Activated CD4-positive, alpha-beta memory T cell treated with anti-CD3 and anti-CD28 coated beads for 36 hours (primary cell): ENCODE measurements at regions of chr17 and their contacts with region 1.

Region 1: DNA sequence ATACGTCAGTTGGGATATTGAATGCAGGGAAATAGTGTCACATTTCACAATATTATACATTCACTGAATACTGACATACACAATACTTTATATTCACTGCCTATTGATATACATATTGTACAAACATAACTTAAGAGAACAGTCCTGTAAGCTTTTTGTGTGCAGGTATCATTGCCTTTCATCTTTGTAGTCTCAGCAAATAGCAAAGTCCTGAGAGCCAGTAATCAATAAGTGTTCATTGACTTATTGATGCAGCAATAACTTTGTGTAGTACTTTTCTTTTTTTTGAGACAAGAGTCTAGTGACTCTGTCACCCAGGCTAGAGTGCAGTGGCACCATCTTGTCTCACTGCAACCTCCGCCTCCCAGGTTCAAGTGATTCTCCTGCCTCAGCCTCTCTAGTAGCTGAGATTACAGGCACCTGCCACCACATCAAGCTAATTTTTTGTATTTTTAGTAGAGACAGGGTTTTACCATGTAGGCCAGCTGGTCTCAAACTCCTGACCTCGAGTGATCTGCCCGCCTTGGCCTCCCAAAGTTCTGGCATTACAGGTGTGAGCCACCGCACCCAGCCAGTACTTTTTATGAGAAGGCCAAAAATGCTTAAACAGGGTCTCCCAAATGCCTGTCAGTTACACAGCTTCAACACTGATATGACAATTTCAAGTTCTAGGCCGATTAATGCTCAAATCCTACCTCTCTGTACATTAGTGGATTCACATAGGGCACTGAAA is 5.4 kb upstream of the NUP85 start:
- DNase-seq: no peak
- H3K4me3 Mint-ChIP-seq: no peak overlapping the region
- H3K27ac Mint-ChIP-seq: no peak overlapping the region
- H3K4me1 Mint-ChIP-seq: peaks cover 7% of the 10 kb centered on the region
- H3K27me3 Mint-ChIP-seq: no peaks in the 10 kb centered on the region

Region 2: GRCh38 chr17:74815550-74816370 is 384.3 kb before region 1 on chr17:
- CTCF ChIA-PET with region 1: no interaction called
- POLR2A ChIA-PET with region 1: no interaction called
- intact Hi-C with region 1: no loop called
- DNase-seq: no peak
- H3K4me3 Mint-ChIP-seq: no peak overlapping the region
- H3K27ac Mint-ChIP-seq: no peak overlapping the region
- H3K4me1 Mint-ChIP-seq: no peaks in the 10 kb centered on the region
- H3K27me3 Mint-ChIP-seq: no peaks in the 10 kb centered on the region

Region 3: DNA sequence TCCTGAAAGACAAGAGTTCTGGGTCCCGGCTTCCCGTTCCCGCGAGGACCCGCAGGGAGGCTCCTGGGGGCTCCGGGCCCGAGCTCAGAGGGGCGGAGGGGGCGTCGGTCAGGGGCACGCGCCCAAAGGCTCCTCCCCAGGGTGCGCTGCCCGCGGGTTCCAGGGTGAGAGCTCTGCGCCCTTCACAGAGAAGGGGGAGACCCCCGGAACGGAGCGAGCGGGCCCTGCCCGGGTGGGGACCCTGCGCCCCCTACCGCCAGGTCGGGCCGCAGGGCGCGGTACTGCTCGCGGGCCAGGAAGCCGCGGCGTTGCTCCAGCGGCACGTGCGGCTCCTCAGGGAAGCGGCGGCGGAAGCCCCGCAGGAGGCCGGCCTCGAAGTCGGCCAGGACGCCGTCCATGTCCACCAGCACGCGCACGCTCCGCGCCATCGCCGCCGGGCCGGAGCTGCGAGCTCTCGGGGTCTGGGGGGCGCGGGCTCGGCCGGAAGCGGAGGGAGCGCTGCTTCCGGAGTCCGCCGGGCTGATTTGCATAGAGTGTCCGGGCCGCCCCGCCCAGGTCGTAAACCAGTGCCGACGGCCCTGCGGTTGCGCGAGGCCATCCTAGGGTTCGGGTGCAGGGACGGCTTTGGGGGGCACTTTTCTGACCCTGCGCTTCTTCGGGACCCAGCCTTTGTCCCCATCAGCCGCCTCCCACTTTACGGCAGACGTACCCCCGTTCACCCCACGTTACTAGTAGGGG is 68.6 kb before region 1 on chr17 and contains the start of gene NT5C:
- CTCF ChIA-PET with region 1: interaction called, 24 read pairs
- POLR2A ChIA-PET with region 1: interaction called, 4 read pairs
- intact Hi-C with region 1: loop called (anchors 5 kb)
- DNase-seq: peak; percentile 83
- H3K4me3 Mint-ChIP-seq: peak within 1 kb of the TSS; percentile 84
- H3K27ac Mint-ChIP-seq: peak within 1 kb of the TSS; percentile 86
- H3K4me1 Mint-ChIP-seq: peaks cover 18% of the 10 kb centered on the region
- H3K27me3 Mint-ChIP-seq: no peaks in the 10 kb centered on the region
- total RNA-seq, gene NT5C: 65.2 to 70.8 TPM

Region 4: GRCh38 chr17:75313941-75314551 is 114.0 kb after region 1 on chr17:
- CTCF ChIA-PET with region 1: no interaction called
- POLR2A ChIA-PET with region 1: no interaction called
- intact Hi-C with region 1: no loop called
- DNase-seq: no peak
- H3K4me3 Mint-ChIP-seq: no peak overlapping the region
- H3K27ac Mint-ChIP-seq: peak overlapping the region; percentile 10
- H3K4me1 Mint-ChIP-seq: peaks cover 25% of the 10 kb centered on the region
- H3K27me3 Mint-ChIP-seq: no peaks in the 10 kb centered on the region